ENCODE measurements at regions of chr7 and their contacts with region 1.

Region 1: DNA sequence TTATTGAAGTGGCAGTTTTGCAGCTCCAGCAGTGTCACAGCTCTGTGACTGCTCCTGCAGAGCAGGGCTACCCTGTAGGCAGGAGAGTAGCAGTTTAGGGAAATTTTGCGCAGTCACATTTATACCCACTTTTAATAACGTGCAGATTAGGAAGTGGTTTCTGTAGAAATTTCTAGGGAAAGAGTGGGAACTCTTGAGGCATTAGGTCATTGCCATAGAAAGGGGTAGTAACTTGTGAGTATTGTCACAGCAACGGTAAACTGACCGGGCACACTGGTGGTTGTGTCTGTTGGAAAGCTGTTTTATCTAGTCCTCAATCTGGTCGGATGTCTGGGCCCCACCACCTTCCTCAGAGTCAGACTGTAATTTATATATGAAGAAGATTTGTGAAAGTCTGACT is 51.9 kb downstream of the CDC14C start:
- H3K4me3 Mint-ChIP-seq: no peak overlapping the region
- H3K27ac Mint-ChIP-seq: peak overlapping the region; percentile 85
- H3K4me1 Mint-ChIP-seq: peaks cover 43% of the 10 kb centered on the region
- H3K27me3 Mint-ChIP-seq: peaks cover 23% of the 10 kb centered on the region

Region 2: GRCh38 chr7:48245751-48246472 is 730.3 kb before region 1 on chr7:
- intact Hi-C with region 1: loop called (anchors 5 kb)
- H3K4me3 Mint-ChIP-seq: no peak overlapping the region
- H3K27ac Mint-ChIP-seq: no peak overlapping the region
- H3K4me1 Mint-ChIP-seq: peaks cover 62% of the 10 kb centered on the region
- H3K27me3 Mint-ChIP-seq: peaks cover 25% of the 10 kb centered on the region

Region 3: GRCh38 chr7:48992816-48993215 is 16.6 kb after region 1 on chr7:
- intact Hi-C with region 1: no loop called
- H3K4me3 Mint-ChIP-seq: no peak overlapping the region
- H3K27ac Mint-ChIP-seq: no peak overlapping the region
- H3K4me1 Mint-ChIP-seq: no peaks in the 10 kb centered on the region
- H3K27me3 Mint-ChIP-seq: peaks cover 25% of the 10 kb centered on the region

Measured in dendritic cell treated with granulocyte-macrophage colony-stimulating factor and Interleukin-4, amounts not matched to agents 40 ng/mL and 50 ng/mL, for 4 days (primary cell).